PC-3 (cell line): ENCODE measurements at regions of chr13 and their contacts with region 1.

Region 1: DNA sequence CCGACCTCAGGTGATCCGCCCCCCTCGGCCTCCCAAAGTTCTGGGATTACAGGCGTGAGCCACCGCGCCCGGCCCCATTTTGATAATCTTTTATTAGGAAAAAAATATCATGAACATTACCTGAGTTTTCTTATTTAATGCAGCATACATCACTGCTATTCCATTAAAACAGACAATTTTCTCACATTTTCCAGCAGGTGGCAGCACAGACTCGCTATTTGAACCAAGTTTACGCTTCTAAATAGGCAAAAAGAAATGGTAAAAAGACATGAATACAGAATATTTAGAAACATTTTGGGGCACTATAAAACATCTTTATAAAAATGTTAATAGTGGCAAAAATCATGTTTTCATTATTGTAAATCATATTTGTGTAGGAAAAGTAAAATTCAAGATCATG is 903.1 kb downstream of the SLITRK6 start:
- DNase-seq: peak; percentile 63
- ATAC-seq: peak; percentile 54
- H3K4me3 ChIP-seq: no peak overlapping the region
- H3K27ac ChIP-seq: no peak overlapping the region
- H3K4me1 ChIP-seq: no peaks in the 10 kb centered on the region
- H3K27me3 ChIP-seq: no peaks in the 10 kb centered on the region
- CTCF ChIP-seq: peak; percentile 74

Region 2: GRCh38 chr13:85816413-85816812 is 920.3 kb after region 1 on chr13:
- CTCF ChIA-PET with region 1: interaction called, 3 read pairs
- POLR2A ChIA-PET with region 1: no interaction called
- intact Hi-C with region 1: loop called (anchors 1 kb)
- DNase-seq: peak; percentile 56
- ATAC-seq: no peak
- H3K4me3 ChIP-seq: no peak overlapping the region
- H3K27ac ChIP-seq: no peak overlapping the region
- H3K4me1 ChIP-seq: no peaks in the 10 kb centered on the region
- H3K27me3 ChIP-seq: no peaks in the 10 kb centered on the region
- CTCF ChIP-seq: peak; percentile 58

Region 3: DNA sequence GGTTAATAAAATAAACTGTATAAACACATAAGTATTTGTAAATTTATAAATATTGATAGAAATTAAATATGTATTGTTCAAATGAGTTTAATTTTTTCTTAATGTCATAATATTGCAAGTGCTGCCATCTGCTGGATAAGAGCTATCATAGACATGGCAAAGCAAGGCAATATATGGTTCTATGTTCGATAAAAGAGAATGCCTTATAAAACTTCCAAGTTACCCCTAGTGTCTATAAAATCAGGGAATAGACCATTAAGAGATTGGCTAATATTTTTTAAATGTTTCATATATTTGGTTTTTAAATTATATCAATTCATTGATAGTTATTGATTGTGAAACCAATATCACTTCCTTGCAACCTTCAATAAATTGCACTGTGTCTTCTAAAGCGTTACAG is 932.0 kb after region 1 on chr13:
- CTCF ChIA-PET with region 1: no interaction called
- POLR2A ChIA-PET with region 1: no interaction called
- intact Hi-C with region 1: loop called (anchors 1 kb)
- DNase-seq: peak; percentile 43
- ATAC-seq: no peak
- H3K4me3 ChIP-seq: no peak overlapping the region
- H3K27ac ChIP-seq: no peak overlapping the region
- H3K4me1 ChIP-seq: no peaks in the 10 kb centered on the region
- H3K27me3 ChIP-seq: no peaks in the 10 kb centered on the region
- CTCF ChIP-seq: peak; percentile 55